ENCODE measurements at regions of chr9 and their contacts with region 1.

Region 1: DNA sequence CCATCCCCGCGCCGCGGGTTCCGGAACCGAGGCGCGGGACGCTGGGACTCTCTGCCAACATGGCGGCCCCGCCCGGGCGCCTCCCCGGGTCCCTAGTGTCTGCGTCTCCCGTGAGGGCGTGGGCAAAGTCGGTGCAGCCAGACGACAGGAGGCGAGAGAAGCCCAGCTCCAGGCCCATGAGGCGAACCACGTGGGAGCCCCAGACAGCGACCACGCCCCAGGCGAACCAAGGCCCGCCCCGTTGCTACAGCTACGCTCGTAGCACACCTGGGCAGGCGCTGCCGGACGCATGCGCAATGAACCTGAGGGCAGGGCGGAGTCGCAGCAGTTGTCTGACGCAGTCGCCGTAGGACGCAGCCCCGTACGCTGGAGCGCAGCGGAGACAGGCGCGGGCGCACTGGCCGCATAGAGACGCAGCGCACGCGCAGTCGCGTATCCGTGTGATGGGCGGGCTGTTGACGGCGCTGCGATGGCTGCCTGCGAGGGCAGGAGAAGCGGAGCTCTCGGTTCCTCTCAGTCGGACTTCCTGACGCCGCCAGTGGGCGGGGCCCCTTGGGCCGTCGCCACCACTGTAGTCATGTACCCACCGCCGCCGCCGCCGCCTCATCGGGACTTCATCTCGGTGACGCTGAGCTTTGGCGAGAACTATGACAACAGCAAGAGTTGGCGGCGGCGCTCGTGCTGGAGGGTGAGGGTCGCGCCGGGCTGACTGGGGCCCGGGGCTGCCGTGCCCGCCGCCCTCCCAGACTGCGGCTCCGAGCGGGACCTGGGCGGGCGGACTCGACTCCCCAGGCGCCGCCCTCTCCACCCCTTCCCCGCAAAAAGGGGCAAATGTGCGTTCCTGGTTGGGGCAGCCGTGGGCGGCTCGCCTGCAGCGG is at the start of gene MAN1B1:
- DNase-seq: peak; percentile 98 to 100 (median 100)
- H3K4me3 ChIP-seq: peak within 1 kb of the TSS; percentile 81 to 82
- H3K4me3 Mint-ChIP-seq: peak within 1 kb of the TSS; percentile 88 to 93 (median 90)
- H3K27ac ChIP-seq: peak within 1 kb of the TSS; percentile 92
- H3K27ac Mint-ChIP-seq: peak within 1 kb of the TSS; percentile 90 to 99 (median 96)
- H3K4me1 ChIP-seq: peaks cover 29% of the 10 kb centered on the region
- H3K4me1 Mint-ChIP-seq: peaks cover 17 to 37% (median 28%) of the 10 kb centered on the region in 4 donors
- H3K27me3 ChIP-seq: no peaks in the 10 kb centered on the region
- H3K27me3 Mint-ChIP-seq: no peaks in the 10 kb centered on the region
- total RNA-seq, gene MAN1B1: 63.3 to 71.0 TPM

Region 2: GRCh38 chr9:136991993-136992818 is 94.6 kb before region 1 on chr9 and contains the start of gene PAXX:
- CTCF ChIA-PET with region 1: no interaction called
- POLR2A ChIA-PET with region 1: interaction called, 10 read pairs
- intact Hi-C with region 1: no loop called
- DNase-seq: peak; percentile 92 to 93 (median 93)
- H3K4me3 ChIP-seq: peak within 1 kb of the TSS; percentile 86 to 90
- H3K4me3 Mint-ChIP-seq: peak within 1 kb of the TSS; percentile 84 to 92 (median 88)
- H3K27ac ChIP-seq: peak within 1 kb of the TSS; percentile 85
- H3K27ac Mint-ChIP-seq: peak within 1 kb of the TSS; percentile 83 to 94 (median 88)
- H3K4me1 ChIP-seq: peaks cover 41% of the 10 kb centered on the region
- H3K4me1 Mint-ChIP-seq: peaks cover 4 to 41% (median 20%) of the 10 kb centered on the region in 4 donors
- H3K27me3 ChIP-seq: no peaks in the 10 kb centered on the region
- H3K27me3 Mint-ChIP-seq: peaks cover 0 to 5% of the 10 kb centered on the region in 2 donors
- total RNA-seq, gene PAXX: 94.2 to 101 TPM

Region 3: DNA sequence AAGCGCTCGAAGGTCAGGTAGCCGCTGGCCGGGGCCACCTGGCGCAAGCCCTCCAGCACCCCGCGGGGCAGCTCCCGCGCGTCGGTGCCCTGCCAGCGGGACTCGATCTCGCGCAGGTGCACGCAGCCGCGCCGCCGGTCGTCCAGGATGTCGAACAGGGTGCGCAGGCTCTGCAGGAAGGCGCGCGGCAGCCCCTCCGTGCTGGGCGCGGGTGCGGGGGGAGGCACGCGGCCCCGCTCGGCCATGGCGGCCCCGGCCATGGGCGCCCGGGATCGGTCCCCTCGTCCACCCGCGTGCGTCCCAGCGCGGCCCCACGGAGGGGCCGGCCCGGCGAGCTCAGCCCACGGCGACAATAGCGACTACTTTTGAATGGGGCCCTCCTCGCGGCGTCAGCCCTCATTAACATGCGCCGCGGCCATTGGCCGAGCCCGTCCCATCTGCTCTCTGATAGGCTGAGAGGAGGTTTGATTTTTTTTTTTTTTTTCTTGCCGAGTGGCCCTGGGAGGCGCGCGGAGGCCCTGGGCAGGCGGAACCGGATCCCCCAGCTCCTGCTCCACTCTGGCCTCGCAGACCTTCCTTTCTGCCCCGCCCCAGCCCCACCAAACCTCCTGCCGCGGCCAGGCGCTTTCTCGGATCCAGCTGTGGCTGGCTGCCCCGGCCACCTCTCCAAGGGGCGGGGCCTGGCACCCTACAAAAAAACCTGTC is 16.4 kb before region 1 on chr9 and contains the start of gene SAPCD2:
- CTCF ChIA-PET with region 1: interaction called, 20 read pairs
- POLR2A ChIA-PET with region 1: interaction called, 66 read pairs
- intact Hi-C with region 1: loop called (anchors 1 kb)
- DNase-seq: peak; percentile 86 to 91 (median 87)
- H3K4me3 ChIP-seq: peak within 1 kb of the TSS in 1 of 2 donors; percentile 57
- H3K4me3 Mint-ChIP-seq: peak within 1 kb of the TSS; percentile 59 to 86 (median 75)
- H3K27ac ChIP-seq: no peak within 1 kb of the TSS
- H3K27ac Mint-ChIP-seq: peak within 1 kb of the TSS in 5 of 7 donors; percentile 47 to 91 (median 82)
- H3K4me1 ChIP-seq: peaks cover 21% of the 10 kb centered on the region
- H3K4me1 Mint-ChIP-seq: peaks cover 4 to 17% (median 11%) of the 10 kb centered on the region in 4 donors
- H3K27me3 ChIP-seq: no peaks in the 10 kb centered on the region
- H3K27me3 Mint-ChIP-seq: peaks cover 0 to 4% of the 10 kb centered on the region in 2 donors
- total RNA-seq, gene SAPCD2: 0.09 to 0.11 TPM

Region 4: DNA sequence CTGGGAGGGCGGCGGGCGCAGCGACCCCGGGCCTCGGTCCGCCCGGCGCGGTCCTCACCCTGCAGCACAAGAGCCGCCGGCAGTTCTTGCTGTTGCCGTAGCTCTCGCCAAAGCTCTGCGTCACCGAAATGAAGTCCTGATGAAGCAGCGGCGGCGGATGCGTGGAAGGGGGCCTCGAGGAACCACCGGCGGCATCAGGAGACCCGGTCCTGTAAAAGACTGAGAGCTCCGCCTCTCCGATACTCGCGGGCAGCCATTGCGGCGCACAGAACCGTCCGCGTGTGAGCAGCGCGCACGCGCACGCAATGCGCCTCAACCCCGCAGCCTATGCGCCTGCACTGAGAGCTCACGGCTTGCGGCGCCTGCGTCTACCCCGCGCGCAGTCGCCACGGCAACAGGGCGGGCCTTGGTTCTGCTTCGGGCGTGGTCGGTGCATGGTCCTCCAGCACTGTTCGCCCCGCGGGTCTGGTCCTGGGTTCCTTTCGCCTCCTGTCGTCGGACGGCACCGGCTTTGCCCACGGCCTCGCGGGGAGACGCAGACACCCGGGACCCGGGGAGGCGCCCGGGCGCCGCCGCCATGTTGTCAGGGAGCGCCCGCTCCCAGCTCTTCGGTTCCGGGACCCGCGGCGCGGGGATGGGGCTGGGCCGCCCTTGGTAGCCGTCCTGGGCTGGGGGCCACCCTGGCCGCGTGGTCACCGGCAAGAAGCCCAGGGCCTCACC is 42.8 kb after region 1 on chr9:
- CTCF ChIA-PET with region 1: interaction called, 6 read pairs
- POLR2A ChIA-PET with region 1: interaction called, 27 read pairs
- intact Hi-C with region 1: loop called (anchors 2 kb)
- DNase-seq: peak; percentile 89 to 92 (median 91)
- H3K4me3 ChIP-seq: peak overlapping the region in 1 of 2 donors; percentile 84
- H3K4me3 Mint-ChIP-seq: peak overlapping the region; percentile 86 to 97 (median 90)
- H3K27ac ChIP-seq: peak overlapping the region; percentile 80
- H3K27ac Mint-ChIP-seq: peak overlapping the region; percentile 82 to 99 (median 92)
- H3K4me1 ChIP-seq: peaks cover 31% of the 10 kb centered on the region
- H3K4me1 Mint-ChIP-seq: peaks cover 23 to 35% (median 30%) of the 10 kb centered on the region in 4 donors
- H3K27me3 ChIP-seq: no peaks in the 10 kb centered on the region
- H3K27me3 Mint-ChIP-seq: peaks cover 2 to 4% of the 10 kb centered on the region in 2 donors

Region 5: GRCh38 chr9:137223078-137223970 is 136.6 kb after region 1 on chr9:
- CTCF ChIA-PET with region 1: no interaction called
- POLR2A ChIA-PET with region 1: interaction called, 20 read pairs
- intact Hi-C with region 1: loop called (anchors 1 kb)
- DNase-seq: peak; percentile 96 to 99 (median 99)
- H3K4me3 ChIP-seq: peak overlapping the region; percentile 66 to 85
- H3K4me3 Mint-ChIP-seq: peak overlapping the region; percentile 62 to 84 (median 77)
- H3K27ac ChIP-seq: peak overlapping the region; percentile 83
- H3K27ac Mint-ChIP-seq: peak overlapping the region; percentile 42 to 87 (median 68)
- H3K4me1 ChIP-seq: peaks cover 18% of the 10 kb centered on the region
- H3K4me1 Mint-ChIP-seq: peaks cover 2 to 19% (median 6%) of the 10 kb centered on the region in 4 donors
- H3K27me3 ChIP-seq: no peaks in the 10 kb centered on the region
- H3K27me3 Mint-ChIP-seq: peaks cover 2 to 3% of the 10 kb centered on the region in 2 donors

Region 6: GRCh38 chr9:137277329-137278041 is 190.7 kb after region 1 on chr9 and contains the start of gene TOR4A:
- CTCF ChIA-PET with region 1: no interaction called
- POLR2A ChIA-PET with region 1: no interaction called
- intact Hi-C with region 1: no loop called
- DNase-seq: no peak
- H3K4me3 ChIP-seq: peak within 1 kb of the TSS in 1 of 2 donors; percentile 47
- H3K4me3 Mint-ChIP-seq: peak within 1 kb of the TSS; percentile 61 to 83 (median 80)
- H3K27ac ChIP-seq: peak within 1 kb of the TSS; percentile 31
- H3K27ac Mint-ChIP-seq: peak within 1 kb of the TSS in 3 of 7 donors; percentile 13 to 79 (median 66)
- H3K4me1 ChIP-seq: peaks cover 11% of the 10 kb centered on the region
- H3K4me1 Mint-ChIP-seq: peaks cover 4 to 19% (median 10%) of the 10 kb centered on the region in 4 donors
- H3K27me3 ChIP-seq: no peaks in the 10 kb centered on the region
- H3K27me3 Mint-ChIP-seq: peaks cover under 1 to 2% of the 10 kb centered on the region in 2 donors
- total RNA-seq, gene TOR4A: 2.1 TPM

Measured in CD4-positive, alpha-beta memory T cell (primary cell).